ENCODE measurements at regions of chr11 and their contacts with region 1.

Region 1: DNA sequence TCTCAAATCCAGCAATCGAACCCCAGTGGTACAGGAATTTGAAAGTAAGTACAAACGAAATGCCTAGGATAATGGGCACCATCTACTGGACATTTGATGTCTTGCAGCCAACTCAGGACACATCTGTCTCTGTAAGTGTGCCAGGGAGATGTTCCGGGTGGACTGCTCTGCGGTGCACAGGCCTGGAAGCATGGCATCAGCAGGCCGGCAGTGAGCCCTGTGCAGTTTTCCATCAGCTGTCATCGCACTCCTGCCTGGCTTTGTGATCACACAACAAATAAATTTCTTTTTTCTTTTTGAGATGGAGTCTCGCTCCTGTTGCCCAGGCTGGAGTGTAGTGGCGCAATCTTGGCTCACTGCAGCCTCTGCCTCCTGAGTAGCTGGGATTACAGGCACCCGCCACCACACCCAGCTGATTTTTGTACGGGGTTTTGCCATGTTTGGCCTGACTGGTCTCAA is 71.0 kb downstream of the JAM3 start:
- DNase-seq: peak; percentile 43
- ATAC-seq: peak; percentile 92

Region 2: GRCh38 chr11:133927690-133928627 is 211.9 kb before region 1 on chr11:
- intact Hi-C with region 1: loop called (anchors 10 kb)
- DNase-seq: peak; percentile 77
- ATAC-seq: peak; percentile 83

Region 3: GRCh38 chr11:134050541-134051383 is 89.1 kb before region 1 on chr11:
- intact Hi-C with region 1: loop called (anchors 2 kb)
- DNase-seq: peak; percentile 82
- ATAC-seq: peak; percentile 76

Region 4: DNA sequence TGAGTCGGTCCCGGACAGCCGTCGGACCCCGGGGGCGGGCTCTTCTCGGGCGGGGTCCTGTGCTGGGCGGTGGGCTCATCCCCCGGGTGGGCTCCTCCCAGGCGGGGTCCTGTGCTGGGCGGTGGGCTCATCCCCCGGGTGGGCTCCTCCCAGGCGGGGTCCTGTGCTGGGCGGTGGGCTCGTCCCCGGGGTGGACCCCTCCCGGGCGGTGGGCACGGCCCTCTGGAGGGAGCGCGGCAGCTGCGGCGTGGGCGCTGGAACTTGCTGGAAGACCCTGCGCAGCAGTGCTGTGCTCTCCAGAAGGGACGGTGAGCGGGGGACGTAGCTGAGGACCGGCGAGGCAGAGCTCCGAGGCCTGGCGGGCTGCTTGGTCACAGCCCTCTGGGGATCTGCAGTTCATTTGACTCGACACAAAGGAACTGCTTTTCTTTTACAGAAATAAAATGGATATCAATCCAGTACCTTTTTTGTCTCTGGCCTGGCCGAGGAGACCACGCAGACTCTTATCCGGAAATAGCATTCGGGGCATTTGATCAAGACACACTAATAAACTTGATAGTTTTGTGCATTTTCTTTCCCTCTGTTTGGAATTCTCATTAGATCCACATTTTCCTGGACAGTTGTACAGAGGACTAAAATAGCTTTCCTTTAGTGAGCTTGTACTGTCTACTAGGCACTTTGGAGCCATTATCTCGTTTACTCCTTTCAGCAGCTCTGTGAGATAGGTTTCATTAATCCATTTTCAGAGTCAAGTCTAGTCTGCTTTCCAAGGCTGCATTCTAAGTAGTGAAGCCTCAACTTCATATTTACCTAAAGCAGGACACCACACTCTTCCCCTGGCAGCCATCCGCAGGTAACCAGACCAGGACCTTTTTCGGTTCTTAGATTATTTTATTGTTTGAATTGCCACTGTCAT is 70.2 kb before region 1 on chr11:
- intact Hi-C with region 1: no loop called
- DNase-seq: peak; percentile 45
- ATAC-seq: peak; percentile 76